Activated T-helper 1 cell treated with anti-CD3 and anti-CD28 coated beads, Interleukin-12 subunit alpha, Interleukin-12 subunit beta, Interleukin-2, Interleukin-4 antibody, amounts not matched to agents 30 ng/mL and 10 ng/mL and 1 ng/mL, durations not matched to agents 14 hours and 24 hours and 36 hours (primary cell): ENCODE measurements at regions of chr12 and their contacts with region 1.

Region 1: GRCh38 chr12:52879394-52880351 is 25.2 kb downstream of the KRT8 start:
- DNase-seq: peak; percentile 69
- H3K4me3 Mint-ChIP-seq: peak overlapping the region; percentile 72
- H3K27ac Mint-ChIP-seq: no peak overlapping the region
- H3K4me1 Mint-ChIP-seq: peaks cover 9% of the 10 kb centered on the region
- H3K27me3 Mint-ChIP-seq: peaks cover 13% of the 10 kb centered on the region

Region 2: GRCh38 chr12:52372216-52373154 is 507.2 kb before region 1 on chr12:
- intact Hi-C with region 1: loop called (anchors 1 kb)
- DNase-seq: peak; percentile 14
- H3K4me3 Mint-ChIP-seq: no peak overlapping the region
- H3K27ac Mint-ChIP-seq: no peak overlapping the region
- H3K4me1 Mint-ChIP-seq: no peaks in the 10 kb centered on the region
- H3K27me3 Mint-ChIP-seq: peaks cover 19% of the 10 kb centered on the region

Region 3: GRCh38 chr12:52776913-52777395 is 102.7 kb before region 1 on chr12 and contains the start of gene KRT76:
- intact Hi-C with region 1: no loop called
- DNase-seq: no peak
- H3K4me3 Mint-ChIP-seq: no peak within 1 kb of the TSS
- H3K27ac Mint-ChIP-seq: no peak within 1 kb of the TSS
- H3K4me1 Mint-ChIP-seq: no peaks in the 10 kb centered on the region
- H3K27me3 Mint-ChIP-seq: peaks cover 7% of the 10 kb centered on the region
- total RNA-seq, gene KRT76: not detected in 2 replicates